ENCODE measurements at regions of chr21 and their contacts with region 1.

Region 1: GRCh38 chr21:46458315-46459023 is at the start of gene DIP2A:
- DNase-seq: peak; percentile 87 to 99 (median 94)
- ATAC-seq: peak; percentile 96
- H3K4me3 ChIP-seq: peak within 1 kb of the TSS; percentile 81 to 99
- H3K4me3 Mint-ChIP-seq: peak within 1 kb of the TSS; percentile 90
- H3K27ac ChIP-seq: peak within 1 kb of the TSS; percentile 85 to 94
- H3K27ac Mint-ChIP-seq: peak within 1 kb of the TSS; percentile 96
- H3K4me1 ChIP-seq: peaks cover 44% of the 10 kb centered on the region
- H3K4me1 Mint-ChIP-seq: peaks cover 61% of the 10 kb centered on the region
- H3K27me3 ChIP-seq: no peaks in the 10 kb centered on the region
- H3K27me3 Mint-ChIP-seq: no peaks in the 10 kb centered on the region
- CTCF ChIP-seq: no peak
- total RNA-seq, gene DIP2A: 59.5 to 62.3 TPM

Region 2: GRCh38 chr21:46228345-46229051 is 230.0 kb before region 1 on chr21 and contains the start of gene LSS:
- CTCF ChIA-PET with region 1: no interaction called
- POLR2A ChIA-PET with region 1: no interaction called
- intact Hi-C with region 1: loop called in 1 of 2 experiments (anchors 2 kb)
- DNase-seq: peak; percentile 96 to 100 (median 98)
- ATAC-seq: peak; percentile 97
- H3K4me3 ChIP-seq: peak within 1 kb of the TSS; percentile 81 to 88
- H3K4me3 Mint-ChIP-seq: peak within 1 kb of the TSS; percentile 93
- H3K27ac ChIP-seq: peak within 1 kb of the TSS; percentile 55 to 58
- H3K27ac Mint-ChIP-seq: peak within 1 kb of the TSS; percentile 91
- H3K4me1 ChIP-seq: peaks cover 25% of the 10 kb centered on the region
- H3K4me1 Mint-ChIP-seq: peaks cover 49% of the 10 kb centered on the region
- H3K27me3 ChIP-seq: no peaks in the 10 kb centered on the region
- H3K27me3 Mint-ChIP-seq: no peaks in the 10 kb centered on the region
- CTCF ChIP-seq: no peak
- total RNA-seq, gene LSS: 22.5 to 22.6 TPM

Region 3: GRCh38 chr21:46285761-46286496 is 172.5 kb before region 1 on chr21 and contains the start of gene YBEY:
- CTCF ChIA-PET with region 1: interaction called, 6 read pairs
- POLR2A ChIA-PET with region 1: no interaction called
- intact Hi-C with region 1: loop called (anchors 1 to 10 kb)
- DNase-seq: peak; percentile 59 to 93 (median 84)
- ATAC-seq: peak; percentile 79
- H3K4me3 ChIP-seq: peak within 1 kb of the TSS; percentile 85 to 88
- H3K4me3 Mint-ChIP-seq: peak within 1 kb of the TSS; percentile 90
- H3K27ac ChIP-seq: peak within 1 kb of the TSS; percentile 72 to 86
- H3K27ac Mint-ChIP-seq: peak within 1 kb of the TSS; percentile 94
- H3K4me1 ChIP-seq: peaks cover 38% of the 10 kb centered on the region
- H3K4me1 Mint-ChIP-seq: peaks cover 61% of the 10 kb centered on the region
- H3K27me3 ChIP-seq: no peaks in the 10 kb centered on the region
- H3K27me3 Mint-ChIP-seq: no peaks in the 10 kb centered on the region
- CTCF ChIP-seq: peak; percentile 43
- total RNA-seq, gene YBEY: 10.8 to 13.6 TPM

Region 4: GRCh38 chr21:46374761-46375389 is 83.6 kb before region 1 on chr21:
- CTCF ChIA-PET with region 1: no interaction called
- POLR2A ChIA-PET with region 1: no interaction called
- intact Hi-C with region 1: no loop called
- DNase-seq: no peak
- ATAC-seq: no peak
- H3K4me3 ChIP-seq: no peak overlapping the region
- H3K4me3 Mint-ChIP-seq: no peak overlapping the region
- H3K27ac ChIP-seq: no peak overlapping the region
- H3K27ac Mint-ChIP-seq: no peak overlapping the region
- H3K4me1 ChIP-seq: no peaks in the 10 kb centered on the region
- H3K4me1 Mint-ChIP-seq: peaks cover 5% of the 10 kb centered on the region
- H3K27me3 ChIP-seq: no peaks in the 10 kb centered on the region
- H3K27me3 Mint-ChIP-seq: no peaks in the 10 kb centered on the region
- CTCF ChIP-seq: no peak

Region 5: GRCh38 chr21:46424039-46424591 is 34.4 kb before region 1 on chr21:
- CTCF ChIA-PET with region 1: no interaction called
- POLR2A ChIA-PET with region 1: interaction called, 17 read pairs
- intact Hi-C with region 1: loop called in 1 of 2 experiments (anchors 1 kb)
- DNase-seq: peak in 8 of 9 experiments; percentile 25 to 82 (median 52)
- ATAC-seq: peak; percentile 12
- H3K4me3 ChIP-seq: peak overlapping the region; percentile 18 to 30
- H3K4me3 Mint-ChIP-seq: peak overlapping the region; percentile 82
- H3K27ac ChIP-seq: peak overlapping the region; percentile 84 to 93
- H3K27ac Mint-ChIP-seq: peak overlapping the region; percentile 98
- H3K4me1 ChIP-seq: peaks cover 44% of the 10 kb centered on the region
- H3K4me1 Mint-ChIP-seq: peaks cover 35% of the 10 kb centered on the region
- H3K27me3 ChIP-seq: no peaks in the 10 kb centered on the region
- H3K27me3 Mint-ChIP-seq: no peaks in the 10 kb centered on the region
- CTCF ChIP-seq: no peak

Region 6: DNA sequence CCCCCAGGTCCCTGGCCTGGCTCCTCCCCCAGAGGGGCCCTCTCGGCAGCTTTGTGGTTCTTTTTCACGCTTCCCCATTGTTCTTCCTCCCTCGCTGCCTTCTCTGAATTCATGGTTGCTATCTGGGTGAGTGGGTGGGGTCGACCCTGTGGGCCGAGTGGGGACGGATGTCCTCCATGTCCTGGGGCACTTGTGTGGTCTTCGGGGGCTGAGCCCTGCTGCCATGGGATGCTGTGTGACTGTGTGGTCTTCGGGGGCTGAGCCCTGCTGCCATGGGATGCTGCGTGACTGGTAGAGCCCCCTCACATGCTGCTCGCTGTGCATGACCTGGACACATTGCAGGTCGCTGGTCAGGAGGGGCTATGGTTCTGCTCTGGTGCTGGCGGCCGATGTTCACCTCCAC is 21.4 kb before region 1 on chr21:
- CTCF ChIA-PET with region 1: interaction called, 3 read pairs
- POLR2A ChIA-PET with region 1: interaction called, 4 read pairs
- intact Hi-C with region 1: loop called in 1 of 2 experiments (anchors 2 kb)
- DNase-seq: no peak
- ATAC-seq: no peak
- H3K4me3 ChIP-seq: peak overlapping the region in 1 of 2 experiments; percentile 6
- H3K4me3 Mint-ChIP-seq: peak overlapping the region; percentile 63
- H3K27ac ChIP-seq: peak overlapping the region; percentile 8 to 28
- H3K27ac Mint-ChIP-seq: peak overlapping the region; percentile 89
- H3K4me1 ChIP-seq: peaks cover 25% of the 10 kb centered on the region
- H3K4me1 Mint-ChIP-seq: peaks cover 21% of the 10 kb centered on the region
- H3K27me3 ChIP-seq: no peaks in the 10 kb centered on the region
- H3K27me3 Mint-ChIP-seq: no peaks in the 10 kb centered on the region
- CTCF ChIP-seq: no peak

Region 7: DNA sequence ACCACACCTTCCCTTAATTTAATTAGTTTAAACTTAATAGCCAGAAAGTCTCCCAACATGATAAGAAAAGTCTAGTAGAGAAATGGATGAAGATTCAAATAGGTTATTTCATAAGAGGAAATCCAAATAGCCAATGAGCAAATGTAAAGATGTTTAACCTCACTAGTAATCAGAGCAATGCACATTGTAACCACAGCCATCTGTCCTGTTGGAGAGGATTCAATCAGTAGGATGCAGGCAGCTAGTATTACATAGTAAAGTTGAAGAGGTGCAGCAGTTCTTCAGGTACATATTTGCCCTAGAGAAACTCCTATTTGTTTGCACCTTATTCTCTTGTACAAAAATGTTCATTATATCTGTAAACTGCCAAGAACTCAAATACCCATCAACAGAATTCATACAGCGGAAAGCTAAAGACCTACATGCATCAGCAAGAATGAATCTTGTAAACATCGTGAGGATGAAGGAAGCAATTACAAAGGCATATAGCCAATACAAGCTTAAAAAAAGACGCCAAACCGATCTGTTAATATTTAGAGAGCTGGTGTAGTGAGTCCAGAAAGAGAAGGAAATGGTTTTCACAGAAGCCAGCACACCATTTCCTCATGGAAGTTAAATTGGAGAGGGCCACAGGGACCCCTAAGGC is 28.1 kb after region 1 on chr21:
- CTCF ChIA-PET with region 1: no interaction called
- POLR2A ChIA-PET with region 1: no interaction called
- intact Hi-C with region 1: no loop called
- DNase-seq: no peak
- ATAC-seq: no peak
- H3K4me3 ChIP-seq: no peak overlapping the region
- H3K4me3 Mint-ChIP-seq: no peak overlapping the region
- H3K27ac ChIP-seq: no peak overlapping the region
- H3K27ac Mint-ChIP-seq: no peak overlapping the region
- H3K4me1 ChIP-seq: peaks cover 12% of the 10 kb centered on the region
- H3K4me1 Mint-ChIP-seq: peaks cover 36% of the 10 kb centered on the region
- H3K27me3 ChIP-seq: no peaks in the 10 kb centered on the region
- H3K27me3 Mint-ChIP-seq: no peaks in the 10 kb centered on the region
- CTCF ChIP-seq: no peak

Region 8: GRCh38 chr21:46551636-46552241 is 93.3 kb after region 1 on chr21:
- CTCF ChIA-PET with region 1: no interaction called
- POLR2A ChIA-PET with region 1: interaction called, 18 read pairs
- intact Hi-C with region 1: loop called (anchors 1 to 2 kb)
- DNase-seq: peak in 8 of 9 experiments; percentile 34 to 81 (median 55)
- ATAC-seq: peak; percentile 14
- H3K4me3 ChIP-seq: peak overlapping the region in 1 of 2 experiments; percentile 14
- H3K4me3 Mint-ChIP-seq: peak overlapping the region; percentile 66
- H3K27ac ChIP-seq: peak overlapping the region; percentile 59 to 84
- H3K27ac Mint-ChIP-seq: peak overlapping the region; percentile 99
- H3K4me1 ChIP-seq: peaks cover 84% of the 10 kb centered on the region
- H3K4me1 Mint-ChIP-seq: peaks cover 81% of the 10 kb centered on the region
- H3K27me3 ChIP-seq: no peaks in the 10 kb centered on the region
- H3K27me3 Mint-ChIP-seq: no peaks in the 10 kb centered on the region
- CTCF ChIP-seq: no peak

Region 9: DNA sequence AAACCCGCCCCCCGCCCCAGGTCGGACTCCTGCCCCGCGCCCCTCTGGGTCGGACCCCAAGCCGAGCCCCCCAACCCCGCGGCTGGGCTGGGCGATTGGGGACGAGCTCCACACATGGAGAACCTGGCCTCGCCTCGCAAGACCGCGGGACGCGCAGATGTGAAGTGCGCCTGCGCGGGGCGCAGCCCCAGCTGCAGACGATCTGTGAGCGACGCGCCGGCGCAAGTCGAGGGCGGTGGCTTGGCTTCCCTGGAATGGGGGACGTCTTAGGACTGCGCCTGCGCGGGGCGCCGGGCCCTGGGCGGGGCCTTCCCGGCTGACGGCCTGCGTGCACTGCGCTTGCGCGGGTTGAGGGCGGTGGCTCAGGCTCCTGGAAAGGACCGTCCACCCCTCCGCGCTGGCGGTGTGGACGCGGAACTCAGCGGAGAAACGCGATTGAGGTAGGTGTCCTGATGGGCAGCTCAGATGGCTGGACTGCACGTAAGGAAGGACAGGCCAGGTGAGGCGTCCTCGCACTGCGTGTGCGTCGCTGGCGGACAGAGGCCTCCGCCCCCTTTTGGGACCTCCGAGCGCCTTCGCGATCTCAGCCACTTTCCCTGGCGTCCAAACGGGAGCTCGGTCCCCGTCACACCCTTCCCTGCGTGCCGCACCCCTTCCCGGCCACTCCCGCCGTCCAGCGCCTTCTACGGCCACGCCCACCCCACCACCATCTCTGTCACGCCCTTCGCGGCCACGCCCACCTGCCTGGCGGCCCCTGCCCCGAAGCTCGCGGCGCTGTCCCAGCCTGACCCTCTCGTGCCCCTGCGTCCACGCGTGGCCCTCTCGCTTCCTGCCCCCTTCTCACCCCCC is 177.1 kb after region 1 on chr21 and contains the start of gene PRMT2:
- CTCF ChIA-PET with region 1: no interaction called
- POLR2A ChIA-PET with region 1: interaction called, 29 read pairs
- intact Hi-C with region 1: loop called in 1 of 2 experiments (anchors 1 kb)
- DNase-seq: peak; percentile 94 to 100 (median 98)
- ATAC-seq: peak; percentile 83
- H3K4me3 ChIP-seq: peak within 1 kb of the TSS; percentile 97
- H3K4me3 Mint-ChIP-seq: peak within 1 kb of the TSS; percentile 94
- H3K27ac ChIP-seq: peak within 1 kb of the TSS; percentile 95 to 97
- H3K27ac Mint-ChIP-seq: peak within 1 kb of the TSS; percentile 91
- H3K4me1 ChIP-seq: peaks cover 59% of the 10 kb centered on the region
- H3K4me1 Mint-ChIP-seq: peaks cover 80% of the 10 kb centered on the region
- H3K27me3 ChIP-seq: no peaks in the 10 kb centered on the region
- H3K27me3 Mint-ChIP-seq: no peaks in the 10 kb centered on the region
- CTCF ChIP-seq: no peak
- total RNA-seq, gene PRMT2: 78.8 to 78.9 TPM

Measured in CD8-positive, alpha-beta T cell (primary cell).